ENCODE measurements at regions of chr20 and their contacts with region 1.

Region 1: DNA sequence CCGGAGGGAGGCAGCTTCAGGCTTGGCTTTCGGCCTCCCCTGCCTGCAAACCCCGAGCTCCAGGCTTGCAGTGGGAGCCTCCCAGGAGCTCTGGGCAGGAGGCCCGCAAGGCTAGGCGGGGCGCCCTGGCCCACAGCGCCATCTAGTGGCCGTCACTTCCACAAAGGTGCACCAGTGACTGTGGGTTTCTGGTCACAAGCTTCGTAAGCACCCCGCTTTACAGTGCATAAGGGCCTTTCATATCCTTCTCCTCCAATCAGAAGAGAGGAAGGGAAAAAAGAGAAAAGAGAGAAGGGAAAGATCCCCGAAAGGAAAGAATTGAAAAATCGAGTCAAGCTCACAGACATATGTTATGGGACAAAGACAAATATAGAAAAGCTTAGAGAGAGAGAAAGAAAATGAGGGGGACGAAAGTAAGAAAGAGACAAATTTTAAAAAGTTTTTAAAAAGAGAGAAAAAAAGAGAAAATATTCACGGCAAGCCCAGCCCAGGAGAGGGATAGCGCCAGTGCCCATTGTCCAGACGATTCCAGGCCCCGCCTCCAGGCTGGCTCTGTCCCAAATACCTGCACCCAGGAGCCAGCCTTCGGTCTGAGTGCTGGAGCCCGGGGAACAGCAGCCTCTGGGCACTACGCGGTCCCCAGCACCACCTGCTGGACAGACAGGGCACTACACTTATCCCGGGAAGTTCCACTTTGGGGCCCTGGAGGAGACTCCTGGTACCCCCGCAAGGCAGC is 207.1 kb downstream of the PREX1 start:
- ATAC-seq: peak; percentile 80 to 96 (median 94)
- H3K4me3 ChIP-seq: peak overlapping the region in 3 of 5 donors; percentile 1 to 8 (median 8)
- H3K27ac ChIP-seq: no peak overlapping the region
- H3K4me1 ChIP-seq: peaks cover 4 to 9% of the 10 kb centered on the region in 2 donors

Region 2: GRCh38 chr20:47663333-47664067 is 957.2 kb before region 1 on chr20:
- in situ Hi-C with region 1: loop called in 1 of 9 experiments (anchors 25 kb)
- ATAC-seq: peak; percentile 73 to 90 (median 84)
- H3K4me3 ChIP-seq: no peak overlapping the region
- H3K27ac ChIP-seq: no peak overlapping the region
- H3K4me1 ChIP-seq: peaks cover 2 to 9% of the 10 kb centered on the region in 2 donors

Region 3: GRCh38 chr20:47677635-47678453 is 942.8 kb before region 1 on chr20:
- in situ Hi-C with region 1: loop called in 8 of 9 experiments (anchors 5 to 25 kb)
- ATAC-seq: peak in 7 of 8 experiments; percentile 4 to 83 (median 74)
- H3K4me3 ChIP-seq: no peak overlapping the region
- H3K27ac ChIP-seq: no peak overlapping the region
- H3K4me1 ChIP-seq: peaks cover 0 to 2% of the 10 kb centered on the region in 2 donors

Region 4: GRCh38 chr20:47985092-47985850 is 635.4 kb before region 1 on chr20:
- in situ Hi-C with region 1: loop called in 1 of 9 experiments (anchors 25 kb)
- ATAC-seq: peak in 3 of 8 experiments; percentile 46 to 87 (median 79)
- H3K4me3 ChIP-seq: no peak overlapping the region
- H3K27ac ChIP-seq: no peak overlapping the region
- H3K4me1 ChIP-seq: peaks cover 39 to 49% of the 10 kb centered on the region in 2 donors

Region 5: GRCh38 chr20:48065824-48066660 is 554.6 kb before region 1 on chr20:
- in situ Hi-C with region 1: no loop called
- ATAC-seq: no peak
- H3K4me3 ChIP-seq: no peak overlapping the region
- H3K27ac ChIP-seq: no peak overlapping the region
- H3K4me1 ChIP-seq: peaks cover 3% of the 10 kb centered on the region in 2 donors

Region 6: GRCh38 chr20:48188657-48189551 is 431.8 kb before region 1 on chr20:
- in situ Hi-C with region 1: loop called in 1 of 9 experiments (anchors 25 kb)
- ATAC-seq: peak in 2 of 8 experiments; percentile 40 to 42
- H3K4me3 ChIP-seq: no peak overlapping the region
- H3K27ac ChIP-seq: no peak overlapping the region
- H3K4me1 ChIP-seq: peaks cover 27 to 34% of the 10 kb centered on the region in 2 donors

Region 7: DNA sequence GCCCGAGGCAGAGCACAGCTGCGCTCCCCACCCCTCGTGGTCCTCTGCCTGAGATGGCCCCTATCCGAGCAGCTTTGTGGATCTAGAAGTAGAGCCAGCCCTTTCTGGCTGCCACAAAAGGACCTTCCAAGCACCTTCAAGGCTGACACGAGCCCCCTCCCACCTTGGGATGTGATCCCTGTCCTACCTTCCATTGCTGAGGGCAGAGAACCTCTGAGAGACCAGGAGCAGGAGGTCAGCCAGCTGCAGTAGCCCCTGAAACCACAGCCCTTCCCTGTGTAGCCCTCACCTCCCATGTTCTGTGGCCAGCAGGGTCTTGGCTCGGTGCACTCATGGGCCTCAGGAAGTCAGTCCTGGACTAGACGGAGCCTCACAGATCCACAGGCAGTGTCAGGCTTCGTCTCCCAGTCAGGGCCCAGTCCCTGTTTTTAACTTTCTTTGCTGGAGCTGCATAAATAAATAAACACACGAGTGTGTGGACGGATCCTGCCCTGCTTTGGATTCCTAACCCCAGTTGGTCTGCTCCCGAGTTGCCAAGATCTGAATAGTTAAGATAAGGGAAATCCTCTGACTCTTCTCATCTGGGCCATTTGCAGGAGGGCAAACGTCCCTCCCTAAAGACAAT is 300.6 kb before region 1 on chr20:
- in situ Hi-C with region 1: loop called in 1 of 9 experiments (anchors 25 kb)
- ATAC-seq: peak in 5 of 8 experiments; percentile 8 to 87 (median 66)
- H3K4me3 ChIP-seq: no peak overlapping the region
- H3K27ac ChIP-seq: no peak overlapping the region
- H3K4me1 ChIP-seq: peaks cover 7 to 12% of the 10 kb centered on the region in 2 donors

Region 8: GRCh38 chr20:48463403-48464319 is 157.0 kb before region 1 on chr20:
- in situ Hi-C with region 1: no loop called
- ATAC-seq: peak in 7 of 8 experiments; percentile 66 to 94 (median 72)
- H3K4me3 ChIP-seq: no peak overlapping the region
- H3K27ac ChIP-seq: peak overlapping the region; percentile 20 to 71
- H3K4me1 ChIP-seq: peaks cover 46 to 50% of the 10 kb centered on the region in 2 donors

Region 9: DNA sequence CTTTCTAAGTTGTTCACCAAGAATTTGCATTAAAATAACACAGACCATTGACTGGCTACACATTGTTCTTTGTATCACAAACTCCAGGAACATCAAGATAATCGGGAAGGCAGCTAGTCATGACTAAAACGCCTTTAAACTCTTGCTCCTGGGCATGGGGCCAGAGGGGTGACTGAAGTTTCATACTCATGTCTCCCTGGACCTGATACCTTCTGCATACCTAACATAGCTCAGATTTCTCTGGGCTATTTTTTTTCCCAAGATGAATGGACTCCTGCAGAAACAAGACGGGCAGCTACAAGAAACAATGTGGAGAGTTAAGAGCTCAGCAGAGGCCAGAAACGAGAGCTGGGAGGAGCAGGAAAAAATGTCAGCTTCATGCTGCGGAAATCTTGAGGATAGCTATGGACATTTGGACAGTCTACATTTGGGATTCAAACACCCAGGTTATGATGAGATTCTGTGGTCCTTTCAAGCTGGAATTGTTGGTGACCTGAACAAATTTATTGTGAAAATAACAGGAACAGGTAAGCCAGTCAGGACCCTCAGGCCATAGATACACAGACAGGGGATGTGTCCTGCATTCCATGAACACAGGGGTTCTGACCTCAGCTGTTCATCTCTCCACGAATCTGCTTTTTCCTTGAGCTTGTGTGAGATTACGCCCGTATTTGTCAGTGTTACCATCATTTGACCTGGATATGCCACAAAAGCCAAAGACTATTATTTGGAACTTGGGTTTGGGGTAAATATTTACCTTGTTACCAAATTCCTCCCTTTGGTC is 82.1 kb before region 1 on chr20:
- in situ Hi-C with region 1: no loop called
- ATAC-seq: peak in 6 of 8 experiments; percentile 41 to 69 (median 48)
- H3K4me3 ChIP-seq: no peak overlapping the region
- H3K27ac ChIP-seq: no peak overlapping the region
- H3K4me1 ChIP-seq: peaks cover 8% of the 10 kb centered on the region in 2 donors